Calu3 (cell line): ENCODE measurements at regions of chr5 and their contacts with region 1.

Region 1: GRCh38 chr5:154072414-154073171 is 33.8 kb downstream of the MFAP3 start:
- DNase-seq: peak; percentile 84
- H3K4me3 Mint-ChIP-seq: no peak overlapping the region
- H3K27ac Mint-ChIP-seq: no peak overlapping the region
- H3K4me1 Mint-ChIP-seq: peaks cover 9% of the 10 kb centered on the region
- H3K27me3 Mint-ChIP-seq: peaks cover 49% of the 10 kb centered on the region
- CTCF ChIP-seq: peak; percentile 97

Region 2: DNA sequence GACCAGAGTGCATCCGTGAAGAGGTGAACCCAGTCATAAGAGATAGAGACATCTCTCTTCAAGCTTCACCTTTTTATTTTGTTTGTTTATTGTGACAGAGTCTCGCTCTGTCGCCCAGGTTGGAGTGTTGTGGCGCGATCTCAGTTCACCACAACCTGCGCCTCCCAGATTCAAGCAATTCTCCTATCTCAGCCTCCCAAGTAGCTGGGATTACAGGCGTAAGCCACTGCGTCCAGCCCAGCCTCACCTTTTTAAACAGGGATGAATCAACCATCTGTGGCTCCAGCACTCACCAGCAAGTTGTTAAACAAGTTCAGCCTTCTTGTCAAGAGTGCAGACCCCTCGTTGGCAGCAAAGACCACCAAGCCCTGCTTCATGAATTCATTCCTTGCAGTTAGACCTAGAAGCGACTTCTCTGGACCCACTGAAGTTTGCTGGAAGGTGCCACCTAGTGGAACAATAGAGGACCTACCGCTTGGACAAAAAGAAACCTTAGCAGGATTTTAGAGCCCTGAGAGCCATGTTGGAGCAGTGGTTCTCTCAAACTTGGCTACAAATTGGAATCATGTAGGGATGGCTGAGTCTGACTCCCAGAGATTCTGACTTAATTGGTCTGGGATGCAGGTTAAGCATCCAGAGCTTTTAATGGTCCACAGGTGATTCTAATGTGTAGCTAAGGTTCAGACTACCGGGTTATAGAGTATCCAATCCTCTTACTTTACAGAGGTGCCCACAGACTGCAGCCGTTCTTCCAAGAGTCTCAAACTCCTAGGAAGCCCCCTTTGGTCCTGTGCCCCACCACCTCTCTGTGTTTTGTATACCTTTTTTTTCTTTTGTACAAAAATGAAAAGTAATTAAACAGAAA is 107.5 kb after region 1 on chr5:
- CTCF ChIA-PET with region 1: interaction called, 17 read pairs
- intact Hi-C with region 1: loop called (anchors 1 kb)
- DNase-seq: peak; percentile 38
- H3K4me3 Mint-ChIP-seq: no peak overlapping the region
- H3K27ac Mint-ChIP-seq: no peak overlapping the region
- H3K4me1 Mint-ChIP-seq: no peaks in the 10 kb centered on the region
- H3K27me3 Mint-ChIP-seq: peaks cover 61% of the 10 kb centered on the region
- CTCF ChIP-seq: peak; percentile 73

Region 3: GRCh38 chr5:154196955-154197652 is 124.5 kb after region 1 on chr5:
- CTCF ChIA-PET with region 1: interaction called, 20 read pairs
- intact Hi-C with region 1: no loop called
- DNase-seq: no peak
- H3K4me3 Mint-ChIP-seq: no peak overlapping the region
- H3K27ac Mint-ChIP-seq: peak overlapping the region; percentile 67
- H3K4me1 Mint-ChIP-seq: peaks cover 63% of the 10 kb centered on the region
- H3K27me3 Mint-ChIP-seq: no peaks in the 10 kb centered on the region
- CTCF ChIP-seq: no peak

Region 4: DNA sequence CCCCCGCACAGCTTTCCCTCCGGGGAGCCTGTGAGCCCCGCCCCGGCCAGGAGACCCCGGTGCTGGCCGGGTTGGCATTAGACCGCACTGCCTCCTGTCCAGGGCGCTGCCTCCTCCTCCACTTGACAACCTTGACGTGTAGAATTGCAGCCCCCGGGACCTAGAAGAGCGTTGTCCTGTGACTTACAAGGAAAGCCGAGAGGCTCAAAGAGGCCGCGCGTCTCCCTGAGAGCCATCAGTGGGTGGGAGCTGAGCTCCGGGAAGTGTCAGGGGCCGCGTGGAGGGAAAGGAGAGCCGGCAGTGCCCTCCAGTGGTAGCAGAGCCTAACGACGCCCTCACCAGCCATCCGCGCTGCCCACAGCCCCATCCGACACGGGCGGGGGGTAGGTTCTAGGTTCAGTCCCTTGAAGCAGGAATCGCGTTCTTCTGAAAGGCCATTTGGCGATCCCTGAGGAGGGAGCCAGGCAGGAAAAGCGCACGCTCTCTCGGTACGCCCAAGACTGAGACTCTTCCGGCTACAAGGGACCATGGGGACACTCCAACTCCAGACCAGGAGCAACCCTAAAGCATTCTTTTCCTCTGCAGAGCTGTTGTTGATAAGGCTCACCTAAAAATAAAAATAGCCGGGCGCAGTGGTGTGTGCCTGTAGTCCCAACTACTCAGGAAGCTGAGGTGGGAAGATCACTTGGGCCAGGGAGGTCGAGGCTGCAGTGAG is 332.6 kb after region 1 on chr5:
- CTCF ChIA-PET with region 1: interaction called, 44 read pairs
- intact Hi-C with region 1: loop called (anchors 1 kb)
- DNase-seq: peak; percentile 89
- H3K4me3 Mint-ChIP-seq: peak overlapping the region; percentile 54
- H3K27ac Mint-ChIP-seq: no peak overlapping the region
- H3K4me1 Mint-ChIP-seq: no peaks in the 10 kb centered on the region
- H3K27me3 Mint-ChIP-seq: no peaks in the 10 kb centered on the region
- CTCF ChIP-seq: peak; percentile 88

Region 5: GRCh38 chr5:154610321-154611154 is 537.9 kb after region 1 on chr5:
- CTCF ChIA-PET with region 1: interaction called, 3 read pairs
- intact Hi-C with region 1: loop called (anchors 2 kb)
- DNase-seq: peak; percentile 89
- H3K4me3 Mint-ChIP-seq: peak overlapping the region; percentile 48
- H3K27ac Mint-ChIP-seq: no peak overlapping the region
- H3K4me1 Mint-ChIP-seq: peaks cover 9% of the 10 kb centered on the region
- H3K27me3 Mint-ChIP-seq: peaks cover 89% of the 10 kb centered on the region
- CTCF ChIP-seq: peak; percentile 93